ENCODE measurements at regions of chr10 and their contacts with region 1.

Region 1: DNA sequence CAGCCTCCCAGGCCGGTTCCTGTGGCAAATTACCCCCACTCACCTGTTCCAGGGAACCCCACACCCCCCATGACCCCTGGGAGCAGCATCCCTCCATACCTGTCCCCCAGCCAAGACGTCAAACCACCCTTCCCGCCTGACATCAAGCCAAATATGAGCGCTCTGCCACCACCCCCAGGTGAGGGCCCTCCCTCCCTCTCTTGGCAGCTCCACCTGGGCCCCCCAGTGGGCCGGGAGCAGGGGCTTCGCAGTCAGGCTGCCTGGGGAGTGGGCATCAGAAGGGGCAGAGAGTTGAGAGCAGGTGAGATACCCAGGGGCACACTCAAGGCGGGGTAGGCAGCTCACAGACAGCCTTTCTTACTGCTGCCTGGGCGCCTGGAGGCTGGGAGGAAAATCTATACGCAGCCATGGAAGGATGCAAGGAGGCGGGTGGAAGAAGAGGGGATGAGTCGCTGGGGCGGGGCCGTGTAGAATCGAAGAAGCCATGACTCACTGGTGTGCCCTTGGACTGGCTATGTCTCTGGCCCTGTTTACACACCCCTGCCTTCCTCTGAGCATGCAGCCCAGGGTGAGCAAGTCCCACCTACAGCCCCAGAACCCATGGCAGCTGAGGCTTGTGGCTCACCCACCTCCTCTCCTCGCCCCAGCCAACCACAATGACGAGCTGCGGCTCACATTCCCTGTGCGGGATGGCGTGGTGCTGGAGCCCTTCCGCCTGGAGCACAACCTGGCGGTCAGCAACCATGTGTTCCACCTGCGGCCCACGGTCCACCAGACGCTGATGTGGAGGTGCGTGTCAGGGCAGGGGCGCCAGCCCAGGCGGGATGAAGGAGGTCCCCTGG is 48.6 kb upstream of the PPIF start:
- DNase-seq: peak; percentile 100
- ATAC-seq: peak; percentile 93
- H3K4me3 ChIP-seq: no peak overlapping the region
- H3K27ac ChIP-seq: peak overlapping the region; percentile 56
- H3K4me1 ChIP-seq: peaks cover 44% of the 10 kb centered on the region
- H3K27me3 ChIP-seq: no peaks in the 10 kb centered on the region
- CTCF ChIP-seq: no peak

Region 2: GRCh38 chr10:78974617-78975317 is 323.9 kb before region 1 on chr10:
- CTCF ChIA-PET with region 1: no interaction called
- POLR2A ChIA-PET with region 1: no interaction called
- intact Hi-C with region 1: no loop called
- DNase-seq: peak; percentile 95
- ATAC-seq: peak; percentile 16
- H3K4me3 ChIP-seq: peak overlapping the region; percentile 53
- H3K27ac ChIP-seq: peak overlapping the region; percentile 79
- H3K4me1 ChIP-seq: peaks cover 39% of the 10 kb centered on the region
- H3K27me3 ChIP-seq: no peaks in the 10 kb centered on the region
- CTCF ChIP-seq: peak; percentile 100

Region 3: DNA sequence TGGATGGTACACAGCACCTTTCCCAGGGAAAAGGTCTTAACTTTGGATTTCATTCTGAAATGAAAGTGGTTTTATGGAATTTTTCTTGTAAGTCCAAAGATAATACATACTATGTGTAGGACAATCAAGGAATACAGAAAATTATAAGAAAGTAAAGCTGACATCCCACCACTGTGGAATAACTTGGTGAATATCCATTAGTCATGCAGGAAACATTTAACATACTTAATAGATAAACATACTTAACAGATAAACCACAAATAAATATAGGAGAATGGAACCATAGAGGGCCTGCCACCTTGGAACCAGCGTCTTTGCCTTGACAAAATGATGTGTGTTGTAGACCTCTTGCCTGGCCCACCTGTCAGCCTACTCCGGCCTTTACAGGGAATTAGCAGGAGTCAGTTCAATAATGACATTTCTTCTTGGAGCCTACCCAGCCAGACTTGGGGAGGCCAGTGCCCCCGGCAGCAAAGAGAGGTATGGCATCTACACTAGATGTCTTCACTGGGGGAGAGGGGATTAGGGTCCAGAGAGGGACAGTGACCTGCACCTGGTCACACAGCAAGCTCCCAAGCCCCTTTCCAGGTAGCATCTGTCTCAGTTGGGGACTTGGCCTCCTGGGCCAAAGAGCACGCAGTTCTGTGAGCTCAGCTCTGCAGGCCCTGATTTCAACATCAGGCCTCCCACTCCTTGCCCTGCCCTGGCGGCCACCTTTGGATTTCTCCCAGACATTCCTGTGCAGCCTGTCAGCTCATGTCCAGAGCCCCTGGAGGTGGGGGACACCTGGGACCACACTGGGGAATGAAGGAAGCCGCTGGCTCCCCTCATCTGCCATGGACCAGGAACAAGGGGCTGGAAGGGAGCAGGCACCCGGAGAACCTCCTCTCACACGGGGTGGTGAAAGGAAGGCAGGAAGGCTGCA is 64.0 kb before region 1 on chr10:
- CTCF ChIA-PET with region 1: no interaction called
- POLR2A ChIA-PET with region 1: no interaction called
- intact Hi-C with region 1: loop called (anchors 2 kb)
- DNase-seq: peak; percentile 83
- ATAC-seq: peak; percentile 69
- H3K4me3 ChIP-seq: no peak overlapping the region
- H3K27ac ChIP-seq: peak overlapping the region; percentile 0
- H3K4me1 ChIP-seq: peaks cover 34% of the 10 kb centered on the region
- H3K27me3 ChIP-seq: no peaks in the 10 kb centered on the region
- CTCF ChIP-seq: no peak; the same call in 1 of the 2 replicates

Region 4: DNA sequence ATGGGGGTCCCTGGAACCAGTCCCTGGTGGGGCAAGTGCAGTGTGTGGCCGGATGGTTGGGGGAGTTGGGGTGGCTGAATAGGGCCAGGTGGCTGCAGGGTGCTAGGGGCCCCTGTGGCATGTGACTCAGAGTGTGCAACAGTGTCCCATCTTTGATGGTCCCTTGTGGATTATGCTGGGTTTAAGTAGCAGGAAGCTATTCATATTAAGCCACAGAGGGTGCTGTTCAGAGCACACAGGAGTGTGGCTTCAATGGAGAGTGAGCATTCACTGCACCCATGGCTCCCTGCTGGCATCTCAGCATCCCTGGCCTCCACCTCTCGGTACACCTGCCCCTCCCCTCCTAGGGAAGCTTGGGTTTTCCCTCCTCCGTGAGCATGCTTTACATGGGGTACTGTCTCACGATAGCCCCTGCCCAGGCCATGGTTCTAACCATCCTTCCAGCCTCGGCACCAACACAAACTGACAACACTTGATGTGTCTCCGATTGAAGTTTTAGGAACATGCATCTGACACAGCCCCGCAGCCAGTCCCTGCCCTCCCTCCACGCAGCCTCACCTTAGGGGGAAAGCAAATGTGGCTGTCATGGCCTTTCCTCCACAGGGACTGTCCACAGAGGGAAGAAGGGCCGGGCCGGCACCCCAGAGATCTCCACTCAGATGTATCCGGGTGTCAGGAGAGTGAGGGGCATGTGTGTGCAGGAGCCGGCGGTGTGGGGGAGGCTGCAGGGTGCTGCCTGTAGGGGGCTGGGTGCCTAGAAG is 18.2 kb after region 1 on chr10:
- CTCF ChIA-PET with region 1: interaction called, 4 read pairs
- POLR2A ChIA-PET with region 1: no interaction called
- intact Hi-C with region 1: loop called (anchors 2 kb)
- DNase-seq: peak; percentile 55
- ATAC-seq: peak; percentile 17
- H3K4me3 ChIP-seq: no peak overlapping the region
- H3K27ac ChIP-seq: peak overlapping the region; percentile 63
- H3K4me1 ChIP-seq: peaks cover 44% of the 10 kb centered on the region
- H3K27me3 ChIP-seq: no peaks in the 10 kb centered on the region
- CTCF ChIP-seq: peak; percentile 50

Region 5: DNA sequence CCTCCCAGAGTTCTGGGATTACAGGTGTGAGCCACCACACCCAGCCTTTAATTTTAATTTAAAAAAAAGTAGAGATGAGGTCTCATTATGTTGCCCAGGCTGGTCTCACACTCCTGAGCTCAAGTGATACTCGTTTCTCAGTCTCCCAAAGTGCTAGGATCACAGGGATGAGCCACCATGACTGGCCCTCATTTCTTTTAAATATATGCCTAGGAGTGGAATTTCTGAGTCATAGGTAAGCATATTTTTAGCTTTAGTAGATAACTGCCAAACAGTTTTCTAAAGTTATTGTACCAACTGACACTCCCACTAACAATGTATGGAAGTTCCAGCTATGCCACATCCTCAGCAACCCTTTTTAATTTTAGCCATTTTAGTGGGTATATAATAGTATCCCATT is 34.9 kb after region 1 on chr10:
- CTCF ChIA-PET with region 1: interaction called, 4 read pairs
- POLR2A ChIA-PET with region 1: no interaction called
- intact Hi-C with region 1: loop called (anchors 1 kb)
- DNase-seq: peak; percentile 100
- ATAC-seq: peak; percentile 49
- H3K4me3 ChIP-seq: no peak overlapping the region
- H3K27ac ChIP-seq: peak overlapping the region; percentile 68
- H3K4me1 ChIP-seq: peaks cover 57% of the 10 kb centered on the region
- H3K27me3 ChIP-seq: no peaks in the 10 kb centered on the region
- CTCF ChIP-seq: no peak

Region 6: DNA sequence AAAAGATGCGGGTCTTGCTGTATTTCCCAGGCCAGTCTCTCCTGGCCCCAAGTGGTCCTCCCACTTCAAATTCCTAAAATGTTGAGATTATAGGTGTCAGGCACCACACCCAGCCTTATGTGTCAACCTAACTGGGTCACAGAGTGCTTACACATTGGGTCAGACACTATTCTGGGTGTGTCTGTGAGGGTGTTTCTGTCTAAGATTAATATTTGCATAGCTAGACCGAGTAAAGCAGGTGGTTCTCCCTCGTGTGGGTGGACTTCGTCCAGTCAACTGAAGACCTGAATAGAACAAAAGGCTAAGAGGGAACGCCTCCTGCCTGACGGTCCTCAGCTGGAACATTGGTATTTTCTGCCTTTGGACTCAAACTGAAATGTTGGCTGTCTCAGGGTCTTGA is 60.2 kb after region 1 on chr10:
- CTCF ChIA-PET with region 1: no interaction called
- POLR2A ChIA-PET with region 1: no interaction called
- intact Hi-C with region 1: no loop called
- DNase-seq: peak; percentile 71
- ATAC-seq: peak; percentile 62
- H3K4me3 ChIP-seq: no peak overlapping the region
- H3K27ac ChIP-seq: no peak overlapping the region
- H3K4me1 ChIP-seq: no peaks in the 10 kb centered on the region
- H3K27me3 ChIP-seq: no peaks in the 10 kb centered on the region
- CTCF ChIP-seq: no peak

Region 7: GRCh38 chr10:79502561-79503309 is 204.1 kb after region 1 on chr10:
- CTCF ChIA-PET with region 1: no interaction called
- POLR2A ChIA-PET with region 1: no interaction called
- intact Hi-C with region 1: loop called (anchors 5 kb)
- DNase-seq: peak; percentile 96
- ATAC-seq: peak; percentile 98
- H3K4me3 ChIP-seq: peak overlapping the region; percentile 8; the same call in 1 of the 2 replicates
- H3K27ac ChIP-seq: no peak overlapping the region
- H3K4me1 ChIP-seq: peaks cover 1% of the 10 kb centered on the region; the same call in 1 of the 2 replicates
- H3K27me3 ChIP-seq: peaks cover 12% of the 10 kb centered on the region; the same call in 1 of the 2 replicates
- CTCF ChIP-seq: peak; percentile 96

Measured in PC-3 (cell line).